OCI-LY7 (cell line): ENCODE measurements at regions of chr14 and their contacts with region 1.

Region 1: GRCh38 chr14:22265319-22266137 is 323.5 kb downstream of the DAD1 start:
- DNase-seq: peak; percentile 64
- H3K4me3 ChIP-seq: no peak overlapping the region
- H3K27ac ChIP-seq: no peak overlapping the region
- H3K4me1 ChIP-seq: peaks cover 15% of the 10 kb centered on the region
- CTCF ChIP-seq: peak; percentile 92

Region 2: GRCh38 chr14:21796916-21797315 is 468.6 kb before region 1 on chr14:
- CTCF ChIA-PET with region 1: no interaction called
- POLR2A ChIA-PET with region 1: no interaction called
- intact Hi-C with region 1: no loop called
- DNase-seq: peak; percentile 3
- H3K4me3 ChIP-seq: no peak overlapping the region
- H3K27ac ChIP-seq: no peak overlapping the region
- H3K4me1 ChIP-seq: no peaks in the 10 kb centered on the region
- CTCF ChIP-seq: peak; percentile 58

Region 3: GRCh38 chr14:21902650-21903103 is 362.9 kb before region 1 on chr14:
- CTCF ChIA-PET with region 1: no interaction called
- POLR2A ChIA-PET with region 1: no interaction called
- intact Hi-C with region 1: no loop called
- DNase-seq: peak; percentile 77
- H3K4me3 ChIP-seq: peak overlapping the region; percentile 49
- H3K27ac ChIP-seq: peak overlapping the region; percentile 32
- H3K4me1 ChIP-seq: peaks cover 20% of the 10 kb centered on the region
- CTCF ChIP-seq: peak; percentile 79

Region 4: GRCh38 chr14:22177870-22178269 is 87.7 kb before region 1 on chr14:
- CTCF ChIA-PET with region 1: no interaction called
- POLR2A ChIA-PET with region 1: no interaction called
- intact Hi-C with region 1: no loop called
- DNase-seq: no peak
- H3K4me3 ChIP-seq: no peak overlapping the region
- H3K27ac ChIP-seq: no peak overlapping the region
- H3K4me1 ChIP-seq: no peaks in the 10 kb centered on the region
- CTCF ChIP-seq: no peak

Region 5: GRCh38 chr14:22303589-22304195 is 38.2 kb after region 1 on chr14:
- CTCF ChIA-PET with region 1: no interaction called
- POLR2A ChIA-PET with region 1: no interaction called
- intact Hi-C with region 1: no loop called
- DNase-seq: peak; percentile 46
- H3K4me3 ChIP-seq: no peak overlapping the region
- H3K27ac ChIP-seq: no peak overlapping the region
- H3K4me1 ChIP-seq: no peaks in the 10 kb centered on the region
- CTCF ChIP-seq: peak; percentile 89

Region 6: DNA sequence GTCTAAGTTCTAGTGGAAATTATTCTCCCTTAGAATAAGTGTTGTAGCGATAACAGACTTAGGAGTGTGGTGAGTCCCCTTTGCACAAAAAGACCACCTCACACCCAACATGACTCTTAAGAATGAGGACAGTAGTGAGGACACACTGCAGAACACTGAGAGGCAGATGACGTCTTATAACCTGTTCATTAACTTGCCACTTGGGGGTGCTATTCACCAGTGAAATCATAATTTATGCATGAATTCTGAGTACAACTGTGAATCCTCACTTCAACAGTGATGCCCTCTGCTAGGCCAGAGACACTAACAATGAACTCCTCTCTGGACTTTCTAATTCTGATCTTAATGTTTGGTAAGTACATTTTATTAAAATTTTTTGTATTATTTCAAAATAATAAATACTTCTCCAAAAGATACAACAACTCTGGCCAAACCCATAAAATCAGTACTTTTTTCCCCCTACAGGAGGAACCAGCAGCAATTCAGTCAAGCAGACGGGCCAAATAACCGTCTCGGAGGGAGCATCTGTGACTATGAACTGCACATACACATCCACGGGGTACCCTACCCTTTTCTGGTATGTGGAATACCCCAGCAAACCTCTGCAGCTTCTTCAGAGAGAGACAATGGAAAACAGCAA is 48.8 kb after region 1 on chr14:
- CTCF ChIA-PET with region 1: interaction called, 3 read pairs
- POLR2A ChIA-PET with region 1: interaction called, 8 read pairs
- intact Hi-C with region 1: loop called (anchors 5 kb)
- DNase-seq: peak; percentile 81
- H3K4me3 ChIP-seq: no peak overlapping the region
- H3K27ac ChIP-seq: no peak overlapping the region
- H3K4me1 ChIP-seq: peaks cover 8% of the 10 kb centered on the region
- CTCF ChIP-seq: peak; percentile 96